ENCODE measurements at regions of chr1 and their contacts with region 1.

Region 1: GRCh38 chr1:116485071-116485735 is 85.6 kb downstream of the CD58 start:
- DNase-seq: peak; percentile 71
- ATAC-seq: peak; percentile 92
- H3K4me3 Mint-ChIP-seq: no peak overlapping the region
- H3K27ac Mint-ChIP-seq: no peak overlapping the region
- H3K4me1 Mint-ChIP-seq: peaks cover 12% of the 10 kb centered on the region
- H3K27me3 Mint-ChIP-seq: no peaks in the 10 kb centered on the region
- CTCF ChIP-seq: peak; percentile 31

Region 2: DNA sequence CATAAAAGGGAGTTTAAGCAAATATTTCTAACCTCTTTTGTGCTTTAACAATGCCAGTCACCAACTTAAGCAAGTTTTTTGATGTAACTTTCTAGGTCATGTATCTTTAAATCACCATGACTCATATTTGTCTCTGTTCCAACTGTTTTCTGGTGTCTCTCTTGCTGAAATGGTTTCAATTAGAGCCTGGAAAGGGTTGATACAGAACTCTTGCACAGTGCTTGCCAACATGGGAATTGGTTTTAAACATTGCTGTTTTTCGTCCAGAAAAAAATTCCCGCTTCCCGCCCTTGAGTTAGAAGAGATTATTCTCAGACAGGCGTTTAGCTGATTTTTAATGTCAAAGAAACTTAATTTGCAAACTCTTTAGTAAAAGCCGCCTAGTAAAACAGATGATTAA is 555.3 kb before region 1 on chr1:
- CTCF ChIA-PET with region 1: no interaction called
- POLR2A ChIA-PET with region 1: no interaction called
- intact Hi-C with region 1: no loop called
- DNase-seq: no peak
- ATAC-seq: no peak
- H3K4me3 Mint-ChIP-seq: no peak overlapping the region
- H3K27ac Mint-ChIP-seq: no peak overlapping the region
- H3K4me1 Mint-ChIP-seq: peaks cover 3% of the 10 kb centered on the region
- H3K27me3 Mint-ChIP-seq: peaks cover 2% of the 10 kb centered on the region
- CTCF ChIP-seq: no peak

Region 3: DNA sequence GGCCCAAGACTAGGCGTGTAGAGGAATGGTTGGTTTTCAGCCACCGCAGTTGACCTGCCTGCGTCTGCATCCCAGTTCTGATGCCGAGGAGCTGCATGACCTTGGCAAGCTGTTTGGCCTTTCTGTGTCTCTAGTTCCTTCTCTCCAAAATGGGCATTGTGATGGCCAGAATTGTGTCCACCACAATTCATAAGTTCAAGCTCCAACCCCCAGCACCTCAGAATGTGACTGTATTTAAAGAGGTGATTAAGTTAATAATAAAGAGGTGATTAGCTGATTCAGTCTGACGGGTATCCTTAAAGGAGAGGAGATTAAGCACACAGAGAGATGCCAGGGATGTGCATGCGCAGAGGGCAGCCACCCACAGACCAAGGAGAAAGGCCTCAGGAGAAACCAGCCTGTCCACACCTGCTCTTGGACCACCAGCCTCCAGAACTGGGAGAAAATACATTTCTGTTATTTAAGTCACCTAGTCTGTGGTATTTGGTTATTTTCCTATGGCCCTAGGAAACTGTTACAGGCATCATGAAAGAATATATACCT is 345.5 kb before region 1 on chr1:
- CTCF ChIA-PET with region 1: interaction called, 250 read pairs
- POLR2A ChIA-PET with region 1: interaction called, 15 read pairs
- intact Hi-C with region 1: loop called (anchors 1 kb)
- DNase-seq: no peak
- ATAC-seq: no peak
- H3K4me3 Mint-ChIP-seq: no peak overlapping the region
- H3K27ac Mint-ChIP-seq: no peak overlapping the region
- H3K4me1 Mint-ChIP-seq: peaks cover 5% of the 10 kb centered on the region
- H3K27me3 Mint-ChIP-seq: peaks cover 5% of the 10 kb centered on the region
- CTCF ChIP-seq: no peak

Region 4: DNA sequence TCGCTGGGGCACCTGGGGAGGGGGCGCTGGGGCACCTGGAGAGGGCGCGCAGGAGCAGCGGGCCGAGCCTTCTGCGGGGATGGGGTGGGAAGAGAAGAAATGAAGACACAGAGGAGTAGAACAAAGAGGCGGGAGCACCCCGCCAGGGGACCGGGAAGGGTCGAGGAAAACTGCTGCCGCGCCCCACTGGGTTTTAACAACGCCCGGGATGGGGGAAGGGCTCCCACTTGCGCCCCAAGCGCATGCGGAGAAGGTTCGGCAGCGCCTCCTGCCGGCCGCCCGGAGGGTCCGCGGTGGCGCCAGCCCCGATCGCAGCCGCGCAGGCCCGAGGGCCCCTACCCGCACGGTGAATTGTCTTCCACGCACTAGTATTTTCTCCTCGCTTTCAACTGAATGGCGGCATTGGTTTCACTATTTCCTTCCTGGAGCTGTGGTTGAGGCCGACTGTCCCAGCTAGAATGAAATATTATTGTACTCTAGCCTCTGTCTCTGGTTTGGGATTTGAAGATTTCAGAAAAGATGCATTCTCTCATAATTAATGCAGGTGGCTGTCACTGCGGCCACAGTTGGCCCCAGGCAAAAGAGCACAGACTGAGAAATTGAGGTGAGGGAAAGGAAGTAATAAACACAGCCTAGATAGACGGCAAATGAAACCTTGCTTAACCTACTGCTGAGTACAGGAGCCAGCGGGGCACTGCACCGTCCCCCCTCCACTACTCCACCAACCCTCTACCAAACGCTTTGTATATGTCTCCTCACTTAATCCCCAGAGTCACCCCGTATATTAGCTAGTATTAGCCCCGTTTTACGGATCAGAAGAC is 316.7 kb before region 1 on chr1:
- CTCF ChIA-PET with region 1: interaction called, 4 read pairs
- POLR2A ChIA-PET with region 1: no interaction called
- intact Hi-C with region 1: loop called (anchors 1 kb)
- DNase-seq: peak; percentile 75
- ATAC-seq: peak; percentile 98
- H3K4me3 Mint-ChIP-seq: peak overlapping the region; percentile 83
- H3K27ac Mint-ChIP-seq: peak overlapping the region; percentile 41
- H3K4me1 Mint-ChIP-seq: peaks cover 11% of the 10 kb centered on the region
- H3K27me3 Mint-ChIP-seq: peaks cover 6% of the 10 kb centered on the region
- CTCF ChIP-seq: peak; percentile 91

Region 5: DNA sequence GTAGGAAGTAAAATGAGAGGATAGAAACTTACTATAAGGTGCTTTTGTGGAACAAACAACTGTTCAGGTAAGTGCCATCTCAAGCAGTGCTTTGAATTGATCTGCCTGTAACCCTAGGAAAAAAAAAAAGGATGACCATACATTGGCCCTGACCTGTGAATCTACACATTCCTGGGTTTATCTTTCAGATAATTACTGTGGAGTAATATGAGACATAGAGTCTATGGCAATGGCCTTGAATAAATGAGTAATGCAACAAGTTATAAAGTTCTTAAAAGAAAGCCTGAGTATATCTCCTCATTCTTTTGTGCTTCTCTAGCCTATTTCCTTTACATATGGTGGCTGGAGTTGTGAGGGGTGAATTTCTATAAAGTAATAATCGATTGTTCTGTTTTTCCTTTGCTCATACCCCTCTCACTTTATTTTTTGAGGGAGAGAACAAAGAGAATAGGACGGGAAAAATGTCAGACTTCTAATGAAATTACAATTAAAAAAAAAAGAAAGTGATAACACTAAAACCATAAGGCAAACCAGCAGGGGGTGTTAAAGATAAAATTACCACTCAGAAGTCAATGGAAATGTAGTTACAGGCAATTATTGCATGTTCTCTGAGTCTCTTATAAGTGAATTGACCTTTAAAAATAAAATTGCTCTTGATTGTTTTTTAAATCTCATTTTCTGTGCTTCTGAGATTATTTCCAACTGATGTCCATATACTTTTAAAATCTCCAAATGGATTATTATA is 124.6 kb before region 1 on chr1:
- CTCF ChIA-PET with region 1: interaction called, 32 read pairs
- POLR2A ChIA-PET with region 1: no interaction called
- intact Hi-C with region 1: loop called (anchors 1 kb)
- DNase-seq: no peak
- ATAC-seq: no peak
- H3K4me3 Mint-ChIP-seq: no peak overlapping the region
- H3K27ac Mint-ChIP-seq: no peak overlapping the region
- H3K4me1 Mint-ChIP-seq: peaks cover 3% of the 10 kb centered on the region
- H3K27me3 Mint-ChIP-seq: peaks cover 18% of the 10 kb centered on the region
- CTCF ChIP-seq: no peak

Region 6: DNA sequence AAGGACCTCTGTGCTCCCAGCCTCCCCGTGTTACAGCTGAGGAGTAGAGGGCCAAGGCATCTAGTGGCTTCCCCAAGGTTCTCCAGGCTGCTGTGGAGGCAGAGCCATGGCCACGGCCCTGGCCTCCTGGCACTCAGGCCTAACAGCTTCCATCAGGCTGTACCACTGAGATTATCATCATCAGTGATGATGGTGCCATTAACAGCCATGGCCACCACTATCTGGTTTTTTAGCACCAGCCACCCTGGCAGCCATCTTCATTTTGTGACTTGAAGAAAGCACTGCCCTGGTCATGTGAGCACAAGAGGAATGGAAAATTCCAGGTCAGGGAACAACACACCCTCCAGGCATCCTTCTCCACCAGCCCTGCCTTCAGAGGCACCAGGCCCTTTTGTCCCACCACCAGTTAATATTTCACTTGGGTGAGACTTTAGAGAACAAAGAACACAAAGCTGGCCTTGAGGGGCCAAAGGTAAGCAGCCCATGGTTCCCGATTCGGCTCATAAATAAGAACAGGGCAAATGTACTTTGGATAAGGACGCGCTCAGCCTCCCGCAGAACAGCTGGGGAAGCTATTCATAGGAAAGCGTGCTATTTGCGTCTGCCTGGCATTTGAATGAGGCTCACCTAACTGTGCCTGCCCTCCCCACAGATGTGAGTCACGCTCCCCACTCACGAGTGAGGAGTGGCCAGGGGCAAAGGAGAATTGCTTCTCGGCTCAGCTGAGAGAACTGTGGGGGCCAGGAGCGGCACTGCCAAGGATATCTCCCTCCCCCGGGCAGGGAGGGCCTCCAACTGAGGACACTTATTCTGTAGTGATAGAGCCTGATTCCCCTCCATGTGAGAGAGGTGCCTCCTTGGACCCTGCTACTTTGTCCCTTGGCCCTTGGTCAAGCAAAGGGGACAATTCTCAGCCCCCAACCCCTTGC is 10.0 kb before region 1 on chr1:
- CTCF ChIA-PET with region 1: interaction called, 17 read pairs
- POLR2A ChIA-PET with region 1: interaction called, 3 read pairs
- intact Hi-C with region 1: no loop called
- DNase-seq: no peak
- ATAC-seq: no peak
- H3K4me3 Mint-ChIP-seq: no peak overlapping the region
- H3K27ac Mint-ChIP-seq: no peak overlapping the region
- H3K4me1 Mint-ChIP-seq: no peaks in the 10 kb centered on the region
- H3K27me3 Mint-ChIP-seq: no peaks in the 10 kb centered on the region
- CTCF ChIP-seq: no peak

Region 7: GRCh38 chr1:116504308-116505156 is 19.3 kb after region 1 on chr1:
- CTCF ChIA-PET with region 1: interaction called, 59 read pairs
- POLR2A ChIA-PET with region 1: interaction called, 10 read pairs
- intact Hi-C with region 1: loop called (anchors 1 kb)
- DNase-seq: peak; percentile 64
- ATAC-seq: peak; percentile 95
- H3K4me3 Mint-ChIP-seq: peak overlapping the region; percentile 53
- H3K27ac Mint-ChIP-seq: peak overlapping the region; percentile 83
- H3K4me1 Mint-ChIP-seq: peaks cover 63% of the 10 kb centered on the region
- H3K27me3 Mint-ChIP-seq: no peaks in the 10 kb centered on the region
- CTCF ChIP-seq: no peak